Thyroid gland (tissue), 4 donors: ENCODE measurements at regions of chr13 and their contacts with region 1.

Region 1: GRCh38 chr13:27270594-27271520 is at the start of gene RASL11A:
- DNase-seq: peak; percentile 80
- H3K4me3 ChIP-seq: peak within 1 kb of the TSS; percentile 53 to 72 (median 54)
- H3K27ac ChIP-seq: peak within 1 kb of the TSS; percentile 86 to 90 (median 88)
- H3K4me1 ChIP-seq: peaks cover 0 to 4% of the 10 kb centered on the region in 2 donors
- H3K27me3 ChIP-seq: no peaks in the 10 kb centered on the region
- CTCF ChIP-seq: peak; percentile 55 to 98 (median 90)
- POLR2A ChIP-seq: peak; percentile 46 to 88
- total RNA-seq, gene RASL11A: 10.7 to 29.7 (median 12.9) TPM

Region 2: GRCh38 chr13:27171827-27172494 is 98.9 kb before region 1 on chr13:
- intact Hi-C with region 1: loop called (anchors 5 kb)
- DNase-seq: peak; percentile 94 to 95
- H3K4me3 ChIP-seq: peak overlapping the region; percentile 53 to 93 (median 83)
- H3K27ac ChIP-seq: peak overlapping the region; percentile 71 to 94 (median 89)
- H3K4me1 ChIP-seq: peaks cover 27 to 28% of the 10 kb centered on the region in 2 donors
- H3K27me3 ChIP-seq: no peaks in the 10 kb centered on the region
- CTCF ChIP-seq: peak in 2 of 6 experiments; percentile 17 to 18
- POLR2A ChIP-seq: peak in 1 of 2 donors; percentile 24